CD4-positive, alpha-beta T cell (primary cell): ENCODE measurements at regions of chr10 and their contacts with region 1.

Region 1: DNA sequence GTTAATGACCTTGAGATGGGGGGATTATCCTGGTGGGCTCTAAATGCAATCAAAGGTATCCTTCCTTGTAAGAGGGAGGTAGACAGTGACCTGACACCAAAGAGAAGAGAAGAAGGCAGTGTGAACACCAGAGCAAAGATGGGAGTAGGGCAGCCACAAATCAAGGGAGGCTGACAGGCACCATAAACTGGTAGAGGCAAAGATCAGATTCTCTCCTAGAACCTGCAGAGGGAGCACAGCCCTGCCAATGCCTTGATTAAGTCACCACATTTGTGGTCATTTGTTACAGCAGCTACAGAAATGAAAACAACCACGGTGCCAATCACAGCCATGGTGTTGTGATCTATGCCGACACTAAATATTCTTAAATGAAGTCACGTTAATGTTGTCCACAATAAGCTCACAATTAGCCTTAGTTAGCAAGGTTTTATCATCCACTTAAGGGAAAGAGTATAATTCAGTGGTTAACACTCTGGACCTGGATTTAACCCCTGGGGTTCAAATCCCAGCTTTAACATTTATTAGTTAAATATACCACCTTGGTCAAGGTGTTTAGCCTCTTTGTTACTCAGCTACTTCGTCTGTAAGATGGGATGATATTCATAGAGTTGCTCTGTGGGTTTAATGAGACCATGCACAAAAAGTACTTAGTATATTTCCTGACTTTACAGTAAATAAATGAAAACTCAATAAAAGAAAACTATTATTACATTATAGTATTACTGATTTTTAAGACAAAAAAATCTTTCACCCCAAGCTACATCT is 70.8 kb downstream of the SGMS1 start:
- DNase-seq: peak in 6 of 14 experiments; percentile 6 to 69 (median 36)
- ATAC-seq: peak; percentile 68
- H3K4me3 ChIP-seq: no peak overlapping the region
- H3K4me3 Mint-ChIP-seq: no peak overlapping the region
- H3K27ac ChIP-seq: no peak overlapping the region
- H3K27ac Mint-ChIP-seq: no peak overlapping the region
- H3K4me1 ChIP-seq: peaks cover 4% of the 10 kb centered on the region
- H3K4me1 Mint-ChIP-seq: peaks cover 77% of the 10 kb centered on the region
- H3K27me3 ChIP-seq: no peaks in the 10 kb centered on the region
- H3K27me3 Mint-ChIP-seq: no peaks in the 10 kb centered on the region
- CTCF ChIP-seq: peak; percentile 22

Region 2: GRCh38 chr10:50593523-50594376 is 40.8 kb after region 1 on chr10:
- CTCF ChIA-PET with region 1: no interaction called
- POLR2A ChIA-PET with region 1: no interaction called
- intact Hi-C with region 1: no loop called
- DNase-seq: no peak
- ATAC-seq: no peak
- H3K4me3 ChIP-seq: no peak overlapping the region
- H3K4me3 Mint-ChIP-seq: no peak overlapping the region
- H3K27ac ChIP-seq: no peak overlapping the region
- H3K27ac Mint-ChIP-seq: no peak overlapping the region
- H3K4me1 ChIP-seq: no peaks in the 10 kb centered on the region
- H3K4me1 Mint-ChIP-seq: peaks cover 28% of the 10 kb centered on the region
- H3K27me3 ChIP-seq: no peaks in the 10 kb centered on the region
- H3K27me3 Mint-ChIP-seq: no peaks in the 10 kb centered on the region
- CTCF ChIP-seq: no peak

Region 3: DNA sequence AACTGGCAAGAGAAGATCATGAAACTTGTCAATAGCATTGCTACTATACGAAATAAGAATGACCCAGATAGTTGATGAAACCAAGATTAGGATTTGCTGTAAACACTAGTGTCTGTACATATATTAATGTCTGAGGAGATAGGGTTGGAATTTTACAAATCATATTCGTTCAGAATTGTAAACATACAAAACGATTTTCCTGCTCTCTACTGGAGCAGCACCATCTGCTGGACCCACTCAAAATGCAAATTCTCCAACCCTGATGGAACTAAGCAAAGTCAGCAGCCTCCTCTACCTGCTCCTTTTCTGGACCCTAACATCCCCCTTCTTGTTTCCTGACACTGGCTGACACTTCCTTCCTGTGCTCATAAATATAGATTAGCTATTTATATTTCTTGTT is 100.2 kb after region 1 on chr10:
- CTCF ChIA-PET with region 1: interaction called, 4 read pairs
- POLR2A ChIA-PET with region 1: no interaction called
- intact Hi-C with region 1: loop called (anchors 2 kb)
- DNase-seq: peak in 8 of 14 experiments; percentile 6 to 59 (median 39)
- ATAC-seq: peak; percentile 69
- H3K4me3 ChIP-seq: no peak overlapping the region
- H3K4me3 Mint-ChIP-seq: no peak overlapping the region
- H3K27ac ChIP-seq: no peak overlapping the region
- H3K27ac Mint-ChIP-seq: no peak overlapping the region
- H3K4me1 ChIP-seq: peaks cover 12% of the 10 kb centered on the region
- H3K4me1 Mint-ChIP-seq: peaks cover 18% of the 10 kb centered on the region
- H3K27me3 ChIP-seq: no peaks in the 10 kb centered on the region
- H3K27me3 Mint-ChIP-seq: no peaks in the 10 kb centered on the region
- CTCF ChIP-seq: peak; percentile 63